Caco-2 (cell line): ENCODE measurements at regions of chr12 and their contacts with region 1.

Region 1: DNA sequence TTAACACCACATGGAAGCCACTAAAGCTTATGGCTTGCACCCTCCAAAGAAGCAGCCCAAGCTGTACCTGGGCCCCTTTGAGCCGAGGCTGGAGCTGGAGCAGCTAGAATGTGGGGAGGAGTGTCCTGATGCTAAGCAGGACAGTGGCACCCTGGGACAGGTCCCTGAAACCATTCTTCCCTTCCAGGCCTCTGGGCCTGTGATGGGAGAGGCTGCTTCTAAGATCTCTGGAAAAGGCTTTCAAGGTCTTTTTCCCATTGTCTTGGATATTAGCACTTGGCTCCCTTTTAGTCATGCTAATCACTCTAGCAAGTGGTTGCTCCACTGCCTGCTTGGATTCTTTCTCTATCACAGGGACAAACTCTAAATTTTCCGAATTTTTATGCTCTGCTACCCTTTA is 40.9 kb downstream of the OSBPL8 start:
- DNase-seq: no peak
- H3K4me3 ChIP-seq: no peak overlapping the region
- H3K4me3 Mint-ChIP-seq: no peak overlapping the region
- H3K27ac Mint-ChIP-seq: no peak overlapping the region
- H3K4me1 ChIP-seq: no peaks in the 10 kb centered on the region
- H3K4me1 Mint-ChIP-seq: no peaks in the 10 kb centered on the region
- H3K27me3 ChIP-seq: no peaks in the 10 kb centered on the region
- H3K27me3 Mint-ChIP-seq: no peaks in the 10 kb centered on the region
- CTCF ChIP-seq: no peak

Region 2: GRCh38 chr12:75825686-75826085 is 693.0 kb before region 1 on chr12:
- CTCF ChIA-PET with region 1: no interaction called
- POLR2A ChIA-PET with region 1: no interaction called
- intact Hi-C with region 1: no loop called
- DNase-seq: no peak
- H3K4me3 ChIP-seq: no peak overlapping the region
- H3K4me3 Mint-ChIP-seq: no peak overlapping the region
- H3K27ac Mint-ChIP-seq: no peak overlapping the region
- H3K4me1 ChIP-seq: no peaks in the 10 kb centered on the region
- H3K4me1 Mint-ChIP-seq: no peaks in the 10 kb centered on the region
- H3K27me3 ChIP-seq: no peaks in the 10 kb centered on the region
- H3K27me3 Mint-ChIP-seq: no peaks in the 10 kb centered on the region
- CTCF ChIP-seq: no peak

Region 3: GRCh38 chr12:76441016-76441415 is 77.7 kb before region 1 on chr12:
- CTCF ChIA-PET with region 1: no interaction called
- POLR2A ChIA-PET with region 1: no interaction called
- intact Hi-C with region 1: loop called (anchors 2 kb)
- DNase-seq: no peak
- H3K4me3 ChIP-seq: no peak overlapping the region
- H3K4me3 Mint-ChIP-seq: no peak overlapping the region
- H3K27ac Mint-ChIP-seq: no peak overlapping the region
- H3K4me1 ChIP-seq: peaks cover 40% of the 10 kb centered on the region
- H3K4me1 Mint-ChIP-seq: peaks cover 8% of the 10 kb centered on the region
- H3K27me3 ChIP-seq: no peaks in the 10 kb centered on the region
- H3K27me3 Mint-ChIP-seq: no peaks in the 10 kb centered on the region
- CTCF ChIP-seq: no peak

Region 4: GRCh38 chr12:76489737-76490136 is 29.0 kb before region 1 on chr12:
- CTCF ChIA-PET with region 1: no interaction called
- POLR2A ChIA-PET with region 1: no interaction called
- intact Hi-C with region 1: no loop called
- DNase-seq: no peak
- H3K4me3 ChIP-seq: no peak overlapping the region
- H3K4me3 Mint-ChIP-seq: no peak overlapping the region
- H3K27ac Mint-ChIP-seq: no peak overlapping the region
- H3K4me1 ChIP-seq: no peaks in the 10 kb centered on the region
- H3K4me1 Mint-ChIP-seq: no peaks in the 10 kb centered on the region
- H3K27me3 ChIP-seq: no peaks in the 10 kb centered on the region
- H3K27me3 Mint-ChIP-seq: no peaks in the 10 kb centered on the region
- CTCF ChIP-seq: no peak

Region 5: DNA sequence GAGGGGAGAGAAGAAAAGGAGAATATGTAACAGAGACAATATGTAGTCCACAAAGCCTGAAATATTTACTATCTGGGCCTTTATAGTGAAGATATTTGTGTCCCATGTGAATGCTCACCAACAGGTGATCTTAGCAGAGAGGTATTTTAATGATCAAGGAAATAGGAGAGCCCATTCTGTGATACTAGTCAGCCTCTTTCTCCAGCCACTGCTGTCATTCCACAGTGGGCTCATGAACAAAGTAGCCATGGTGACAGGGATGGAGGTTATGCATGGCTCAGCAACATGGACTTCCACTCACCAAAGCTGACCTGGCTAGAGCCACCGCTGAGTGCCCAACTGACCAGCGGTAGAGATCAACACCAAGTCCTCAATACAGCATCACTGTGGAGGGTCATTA is 17.3 kb before region 1 on chr12:
- CTCF ChIA-PET with region 1: no interaction called
- POLR2A ChIA-PET with region 1: no interaction called
- intact Hi-C with region 1: no loop called
- DNase-seq: no peak
- H3K4me3 ChIP-seq: no peak overlapping the region
- H3K4me3 Mint-ChIP-seq: no peak overlapping the region
- H3K27ac Mint-ChIP-seq: no peak overlapping the region
- H3K4me1 ChIP-seq: no peaks in the 10 kb centered on the region
- H3K4me1 Mint-ChIP-seq: no peaks in the 10 kb centered on the region
- H3K27me3 ChIP-seq: no peaks in the 10 kb centered on the region
- H3K27me3 Mint-ChIP-seq: no peaks in the 10 kb centered on the region
- CTCF ChIP-seq: no peak